Dendritic cell treated with granulocyte-macrophage colony-stimulating factor and Interleukin-4, amounts not matched to agents 40 ng/mL and 50 ng/mL, for 4 days (primary cell): ENCODE measurements at regions of chr3 and their contacts with region 1.

Region 1: DNA sequence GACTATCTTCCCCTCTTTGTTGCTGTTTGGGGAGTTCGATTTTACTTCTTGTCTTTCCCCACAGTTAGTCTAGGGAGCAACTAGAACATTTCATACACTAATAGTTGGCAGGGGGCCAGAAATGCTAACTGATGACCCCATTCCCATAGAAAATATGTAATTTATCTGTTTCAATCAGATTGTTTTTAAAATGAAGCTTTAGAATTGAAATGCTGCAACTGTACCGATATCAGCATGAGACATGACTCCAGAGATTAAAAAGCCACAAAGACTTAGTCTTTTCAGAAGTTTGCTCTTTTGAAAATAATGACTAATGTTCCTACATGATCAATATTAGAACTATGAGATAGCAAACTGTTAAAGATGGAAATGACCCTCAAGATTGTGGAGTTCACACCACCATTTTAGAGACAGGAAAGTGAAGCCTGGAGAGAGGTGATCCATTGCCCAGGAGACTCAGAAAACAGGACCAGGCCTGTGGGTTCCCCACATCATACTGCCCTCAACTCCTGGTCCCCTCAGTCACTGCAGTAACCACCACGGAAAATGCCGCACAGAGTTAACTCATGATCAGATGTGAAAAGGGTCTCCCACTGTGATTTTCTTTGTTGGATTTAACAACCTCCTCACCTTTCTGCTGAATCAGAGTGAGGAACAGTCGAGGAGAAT is 130.3 kb downstream of the CHDH start:
- H3K4me3 Mint-ChIP-seq: no peak overlapping the region
- H3K27ac Mint-ChIP-seq: peak overlapping the region; percentile 42
- H3K4me1 Mint-ChIP-seq: peaks cover 43% of the 10 kb centered on the region
- H3K27me3 Mint-ChIP-seq: peaks cover 32% of the 10 kb centered on the region

Region 2: GRCh38 chr3:53588115-53588514 is 127.8 kb before region 1 on chr3:
- intact Hi-C with region 1: no loop called
- H3K4me3 Mint-ChIP-seq: no peak overlapping the region
- H3K27ac Mint-ChIP-seq: no peak overlapping the region
- H3K4me1 Mint-ChIP-seq: no peaks in the 10 kb centered on the region
- H3K27me3 Mint-ChIP-seq: peaks cover 18% of the 10 kb centered on the region

Region 3: DNA sequence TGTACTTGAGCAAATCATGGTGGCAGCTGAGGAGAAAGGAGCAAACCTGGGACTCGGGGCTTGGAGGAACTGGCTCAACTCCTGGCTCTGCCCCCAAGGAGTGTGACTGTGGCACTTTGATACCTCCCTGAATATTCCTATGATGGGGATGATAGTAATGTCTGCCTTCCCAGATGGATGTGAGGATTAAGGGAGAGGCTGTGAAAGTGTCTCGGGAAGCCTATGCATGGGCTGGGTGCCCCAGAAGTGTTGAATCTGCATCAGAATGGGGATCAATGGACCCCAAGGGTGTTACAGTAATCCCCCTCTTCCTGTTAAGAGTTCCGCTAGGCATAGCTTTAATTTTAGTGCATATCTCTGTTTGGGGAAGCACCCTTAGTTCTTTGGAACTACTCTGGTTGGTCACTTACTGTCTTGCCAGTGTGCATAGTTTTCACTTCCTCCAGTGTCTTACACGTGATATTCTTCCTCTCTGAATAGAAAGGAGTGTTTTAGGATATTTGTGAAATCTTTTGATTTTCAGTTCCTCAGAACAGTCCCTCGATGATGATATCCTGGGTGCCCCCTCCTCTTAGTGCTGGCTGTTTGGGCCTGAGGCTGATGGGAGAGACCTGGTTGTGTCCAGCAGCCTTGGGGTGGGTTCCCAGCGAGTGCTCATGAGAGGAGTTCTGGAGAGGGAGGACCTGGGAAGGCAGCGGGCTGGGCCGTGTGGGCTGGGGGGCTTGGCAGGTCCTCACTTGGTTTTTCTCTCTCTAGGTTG is 32.7 kb after region 1 on chr3:
- intact Hi-C with region 1: loop called (anchors 5 kb)
- H3K4me3 Mint-ChIP-seq: peak overlapping the region; percentile 59
- H3K27ac Mint-ChIP-seq: peak overlapping the region; percentile 99
- H3K4me1 Mint-ChIP-seq: peaks cover 92% of the 10 kb centered on the region
- H3K27me3 Mint-ChIP-seq: no peaks in the 10 kb centered on the region

Region 4: DNA sequence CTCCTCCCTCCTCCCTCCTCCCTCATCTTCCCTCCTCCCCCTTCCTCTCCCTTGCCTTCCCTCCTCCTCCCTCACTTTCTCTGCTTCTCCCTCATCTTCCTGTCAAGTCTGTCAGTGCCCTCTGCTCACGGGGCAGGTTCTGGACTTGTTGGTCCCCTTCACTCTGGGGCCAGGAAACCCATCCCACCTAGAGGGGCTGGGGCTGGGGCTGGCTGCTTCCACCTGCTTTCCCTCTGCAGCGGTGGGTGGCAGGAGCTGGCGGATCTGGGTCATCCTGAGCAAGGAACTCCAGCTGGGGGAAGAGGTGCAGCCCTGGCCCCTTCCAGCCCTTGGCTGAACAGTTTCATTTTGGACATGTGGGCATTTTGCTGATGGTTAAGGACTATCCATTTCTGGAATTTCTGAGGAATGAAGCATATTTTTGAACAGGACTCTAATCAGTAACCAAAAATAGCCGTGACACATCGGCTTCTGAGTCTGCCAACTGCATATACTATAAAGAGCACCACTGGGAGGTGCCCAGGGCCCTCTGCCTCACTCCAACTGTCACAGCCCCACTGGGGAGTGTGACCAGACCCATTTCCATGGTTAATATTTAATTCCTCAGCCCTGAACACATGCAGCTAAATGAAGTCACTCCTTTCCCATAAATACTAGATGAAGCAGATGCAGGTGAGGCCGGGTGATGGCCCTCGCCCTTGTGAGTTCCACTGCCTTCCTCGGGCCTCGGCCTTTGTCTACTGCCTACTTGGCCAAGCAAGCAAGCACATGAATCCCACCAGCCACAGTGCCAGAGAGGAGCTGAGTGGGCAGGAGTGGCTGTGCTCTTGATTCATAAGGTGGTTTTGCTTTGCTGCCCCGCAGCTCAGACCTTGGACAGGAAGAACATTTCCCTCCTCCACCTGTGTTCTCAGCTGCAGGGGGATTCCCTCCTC is 90.5 kb after region 1 on chr3:
- intact Hi-C with region 1: no loop called
- H3K4me3 Mint-ChIP-seq: no peak overlapping the region
- H3K27ac Mint-ChIP-seq: peak overlapping the region; percentile 56
- H3K4me1 Mint-ChIP-seq: peaks cover 29% of the 10 kb centered on the region
- H3K27me3 Mint-ChIP-seq: peaks cover 50% of the 10 kb centered on the region

Region 5: DNA sequence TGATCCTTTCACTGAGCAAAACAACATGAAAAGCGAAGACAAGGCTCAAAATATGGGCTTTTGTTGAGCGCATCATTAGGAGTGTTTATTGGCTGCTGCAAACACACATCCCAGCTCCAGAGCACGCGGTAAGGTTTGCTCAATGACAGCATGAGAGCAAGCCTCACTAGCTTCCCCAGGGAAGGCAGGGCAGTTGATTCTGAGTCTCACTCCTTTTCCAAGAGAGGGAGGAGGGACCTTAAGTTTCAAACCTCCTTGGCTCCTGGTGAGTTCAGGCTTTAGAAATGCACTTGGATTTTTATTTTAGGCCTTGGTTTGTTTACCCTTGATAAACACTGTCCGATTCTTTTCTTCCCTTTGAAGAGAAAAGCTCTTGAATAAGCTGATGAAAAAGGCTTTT is 337.3 kb after region 1 on chr3:
- intact Hi-C with region 1: no loop called
- H3K4me3 Mint-ChIP-seq: no peak overlapping the region
- H3K27ac Mint-ChIP-seq: no peak overlapping the region
- H3K4me1 Mint-ChIP-seq: no peaks in the 10 kb centered on the region
- H3K27me3 Mint-ChIP-seq: no peaks in the 10 kb centered on the region